ENCODE measurements at regions of chr17 and their contacts with region 1.

Region 1: GRCh38 chr17:36705874-36706731 is 104.7 kb downstream of the MRM1 start:
- ATAC-seq: peak; percentile 14 to 78 (median 46)
- H3K4me3 ChIP-seq: no peak overlapping the region
- H3K27ac ChIP-seq: peak overlapping the region in 1 of 2 donors; percentile 21
- H3K4me1 ChIP-seq: peaks cover 39 to 52% of the 10 kb centered on the region in 2 donors

Region 2: DNA sequence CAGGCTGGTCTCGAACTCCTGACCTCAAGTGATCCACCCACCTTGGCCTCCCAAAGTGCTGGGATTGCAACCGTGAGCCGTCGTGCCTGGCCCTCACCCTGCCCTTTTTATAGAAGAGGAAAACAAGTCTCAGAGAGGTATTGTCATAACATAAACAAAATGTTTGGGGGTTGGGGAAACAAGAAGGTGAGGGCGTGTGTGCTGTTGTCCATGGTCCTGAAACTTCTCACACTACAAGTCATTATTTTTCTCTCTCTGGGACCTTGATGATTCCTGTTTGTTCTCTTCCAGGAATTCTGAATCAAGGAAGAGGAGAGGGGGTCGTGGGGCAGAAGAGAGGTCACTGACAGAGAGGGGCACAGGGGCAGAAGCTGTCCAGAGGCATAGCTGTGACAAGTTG is 71.0 kb after region 1 on chr17:
- in situ Hi-C with region 1: no loop called
- ATAC-seq: no peak
- H3K4me3 ChIP-seq: no peak overlapping the region
- H3K27ac ChIP-seq: no peak overlapping the region
- H3K4me1 ChIP-seq: peaks cover 12 to 18% of the 10 kb centered on the region in 2 donors

Region 3: DNA sequence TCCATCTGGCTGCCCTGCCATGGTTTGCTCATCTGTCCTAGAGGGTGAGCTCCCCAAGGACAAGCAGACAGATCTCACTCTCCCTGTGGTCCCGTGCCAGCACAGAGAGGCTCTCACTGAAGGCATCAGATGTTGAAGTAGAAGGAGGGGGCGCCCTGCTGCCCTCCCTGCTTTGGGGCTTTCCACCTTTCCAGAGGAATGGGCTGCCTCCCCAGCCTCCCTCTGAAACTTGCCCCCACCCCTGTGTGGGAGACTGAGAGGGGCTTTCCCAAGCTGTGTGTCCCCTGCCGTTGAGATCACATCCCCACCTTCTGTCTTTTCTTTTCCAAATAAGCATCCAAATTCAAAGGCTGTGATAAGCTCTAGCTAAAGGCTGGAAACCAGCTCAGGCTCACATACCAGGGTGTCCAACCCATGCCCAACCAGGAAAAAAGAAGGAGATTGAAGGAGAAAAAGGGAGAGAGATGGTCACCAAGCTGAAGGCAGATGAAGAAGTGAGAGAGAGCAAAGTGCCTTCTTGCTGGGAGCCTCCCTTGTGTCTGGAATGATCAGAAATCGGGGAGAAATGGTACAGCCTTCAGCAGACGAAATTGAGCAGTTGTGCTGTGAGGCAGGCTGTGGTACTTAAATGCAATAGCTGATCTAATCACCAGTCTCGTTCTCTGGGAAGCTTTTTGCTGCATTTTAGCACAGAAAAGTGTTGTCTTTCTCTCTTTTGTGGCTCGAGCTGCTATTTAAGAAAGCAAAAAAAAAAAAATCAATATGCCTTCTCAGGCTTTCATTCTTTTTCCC is 85.2 kb after region 1 on chr17:
- in situ Hi-C with region 1: no loop called
- ATAC-seq: peak in 5 of 8 experiments; percentile 59 to 75 (median 65)
- H3K4me3 ChIP-seq: peak overlapping the region in 1 of 5 donors; percentile 5
- H3K27ac ChIP-seq: peak overlapping the region; percentile 57 to 70
- H3K4me1 ChIP-seq: peaks cover 12 to 17% of the 10 kb centered on the region in 2 donors

Region 4: GRCh38 chr17:36808181-36808661 is 102.1 kb after region 1 on chr17:
- in situ Hi-C with region 1: loop called in 1 of 9 experiments (anchors 25 kb)
- ATAC-seq: peak in 7 of 8 experiments; percentile 50 to 75 (median 64)
- H3K4me3 ChIP-seq: peak overlapping the region in 3 of 5 donors; percentile 25 to 28 (median 28)
- H3K27ac ChIP-seq: no peak overlapping the region
- H3K4me1 ChIP-seq: peaks cover 35 to 36% of the 10 kb centered on the region in 2 donors

Region 5: GRCh38 chr17:36948717-36949460 is 242.8 kb after region 1 on chr17 and contains the start of gene AATF:
- in situ Hi-C with region 1: loop called in 1 of 9 experiments (anchors 25 kb)
- ATAC-seq: peak; percentile 92 to 98 (median 96)
- H3K4me3 ChIP-seq: peak within 1 kb of the TSS; percentile 63 to 84 (median 68)
- H3K27ac ChIP-seq: peak within 1 kb of the TSS; percentile 80 to 83
- H3K4me1 ChIP-seq: peaks cover 10 to 20% of the 10 kb centered on the region in 2 donors
- total RNA-seq, gene AATF: 30.7 to 60.9 (median 43.3) TPM

Region 6: GRCh38 chr17:37081287-37081686 is 375.2 kb after region 1 on chr17:
- in situ Hi-C with region 1: no loop called
- ATAC-seq: peak in 1 of 8 experiments; percentile 39
- H3K4me3 ChIP-seq: no peak overlapping the region
- H3K27ac ChIP-seq: no peak overlapping the region
- H3K4me1 ChIP-seq: peaks cover 0 to 4% of the 10 kb centered on the region in 2 donors

Measured in motor neuron (in vitro differentiated cells).